Psoas muscle (tissue), 8 donors: ENCODE measurements at regions of chr2 and their contacts with region 1.

Region 1: DNA sequence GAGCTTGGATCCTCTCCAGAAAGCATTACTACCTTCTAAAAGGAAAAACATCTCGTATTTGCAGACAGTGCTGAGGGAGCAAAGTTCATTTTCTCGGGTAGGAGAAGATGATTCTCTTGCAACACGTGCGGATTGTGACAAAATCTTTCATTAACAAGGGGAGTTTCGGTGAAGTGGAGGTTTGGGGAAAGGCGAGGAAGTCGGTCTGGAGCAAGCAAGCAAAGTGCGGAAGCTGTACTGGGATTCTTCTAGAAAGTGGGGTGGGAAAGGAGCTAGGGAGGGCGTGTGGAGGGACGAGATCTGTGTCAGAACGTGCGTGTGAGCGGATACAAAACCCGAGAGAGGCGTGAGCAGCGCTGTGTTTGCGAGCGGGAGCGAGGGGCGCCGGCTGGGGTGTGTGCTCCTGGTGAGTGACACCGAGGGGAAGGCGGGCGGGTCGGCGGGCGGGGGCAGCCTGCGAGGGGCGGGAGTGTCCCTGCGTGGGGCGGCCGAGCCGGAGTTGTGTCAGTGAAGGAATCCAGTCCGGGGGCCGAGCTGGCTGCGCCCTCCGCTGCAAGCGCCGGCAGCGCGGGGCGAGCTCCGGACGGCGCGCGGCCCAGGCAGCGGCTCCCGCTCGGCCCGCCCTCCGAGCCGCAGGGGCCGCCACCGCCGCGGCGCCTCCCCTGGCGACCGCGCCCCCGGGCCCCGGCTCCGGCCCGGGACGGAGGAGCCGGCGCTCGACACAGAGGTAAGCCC is at the start of gene SPATS2L:
- DNase-seq: peak; percentile 83 to 88
- ATAC-seq: peak; percentile 71 to 80 (median 76)
- H3K4me3 ChIP-seq: peak within 1 kb of the TSS; percentile 90
- H3K27ac ChIP-seq: peak within 1 kb of the TSS; percentile 91
- H3K4me1 ChIP-seq: peaks cover 42% of the 10 kb centered on the region
- H3K27me3 ChIP-seq: no peaks in the 10 kb centered on the region
- CTCF ChIP-seq: no peak
- total RNA-seq, gene SPATS2L: 34.2 to 60.2 (median 50.9) TPM

Region 2: GRCh38 chr2:199979832-199980628 is 326.3 kb before region 1 on chr2:
- intact Hi-C with region 1: loop called (anchors 2 to 10 kb)
- DNase-seq: peak; percentile 80 to 89
- ATAC-seq: peak; percentile 63 to 91 (median 73)
- H3K4me3 ChIP-seq: peak overlapping the region; percentile 22
- H3K27ac ChIP-seq: no peak overlapping the region
- H3K4me1 ChIP-seq: no peaks in the 10 kb centered on the region
- H3K27me3 ChIP-seq: no peaks in the 10 kb centered on the region
- CTCF ChIP-seq: peak; percentile 89

Region 3: DNA sequence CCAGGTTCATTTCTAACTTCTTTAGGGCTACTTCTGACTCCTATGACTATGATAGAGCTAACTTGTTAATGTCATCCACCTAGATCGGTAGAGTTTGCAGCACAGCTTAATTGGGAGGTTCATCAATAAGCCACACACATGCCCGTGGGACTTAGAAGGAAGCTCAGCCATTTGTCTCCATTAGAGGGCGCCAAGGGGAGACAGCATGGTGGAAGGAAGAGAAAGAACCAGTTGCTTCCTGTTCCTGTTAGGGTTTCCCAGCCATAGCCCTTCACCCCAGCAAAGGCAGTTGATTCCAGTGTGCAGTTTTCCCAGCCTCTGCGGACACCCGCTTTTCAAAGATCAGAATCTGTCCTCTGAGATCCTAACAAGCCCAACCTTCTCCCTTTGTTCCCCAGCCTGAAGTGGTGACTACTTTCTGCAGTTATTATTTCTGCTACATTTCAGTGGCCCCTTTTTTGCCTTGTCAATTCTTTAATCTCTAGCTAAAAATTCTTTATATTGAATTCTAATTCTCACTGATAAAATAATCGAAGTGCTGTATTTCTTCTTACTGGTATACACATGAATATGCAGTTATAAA is 320.6 kb before region 1 on chr2:
- intact Hi-C with region 1: loop called (anchors 2 to 10 kb)
- DNase-seq: peak; percentile 28 to 55
- ATAC-seq: peak; percentile 49 to 81 (median 62)
- H3K4me3 ChIP-seq: no peak overlapping the region
- H3K27ac ChIP-seq: no peak overlapping the region
- H3K4me1 ChIP-seq: no peaks in the 10 kb centered on the region
- H3K27me3 ChIP-seq: no peaks in the 10 kb centered on the region
- CTCF ChIP-seq: peak; percentile 59

Region 4: GRCh38 chr2:200454927-200455801 is 148.8 kb after region 1 on chr2:
- intact Hi-C with region 1: loop called (anchors 10 kb)
- DNase-seq: no peak
- ATAC-seq: peak; percentile 94 to 98 (median 96)
- H3K4me3 ChIP-seq: no peak overlapping the region
- H3K27ac ChIP-seq: no peak overlapping the region
- H3K4me1 ChIP-seq: peaks cover 21% of the 10 kb centered on the region
- H3K27me3 ChIP-seq: no peaks in the 10 kb centered on the region
- CTCF ChIP-seq: no peak

Region 5: GRCh38 chr2:200466425-200467418 is 160.4 kb after region 1 on chr2:
- intact Hi-C with region 1: loop called in 1 of 2 experiments (anchors 10 kb)
- DNase-seq: peak; percentile 52 to 56
- ATAC-seq: peak; percentile 83 to 92 (median 86)
- H3K4me3 ChIP-seq: peak overlapping the region; percentile 0
- H3K27ac ChIP-seq: peak overlapping the region; percentile 20
- H3K4me1 ChIP-seq: peaks cover 4% of the 10 kb centered on the region
- H3K27me3 ChIP-seq: no peaks in the 10 kb centered on the region
- CTCF ChIP-seq: no peak

Region 6: GRCh38 chr2:200483729-200484198 is 177.4 kb after region 1 on chr2:
- intact Hi-C with region 1: loop called in 1 of 2 experiments (anchors 5 kb)
- DNase-seq: no peak
- ATAC-seq: no peak
- H3K4me3 ChIP-seq: no peak overlapping the region
- H3K27ac ChIP-seq: no peak overlapping the region
- H3K4me1 ChIP-seq: peaks cover 3% of the 10 kb centered on the region
- H3K27me3 ChIP-seq: no peaks in the 10 kb centered on the region
- CTCF ChIP-seq: no peak